CD4-positive, alpha-beta memory T cell (primary cell): ENCODE measurements at regions of chrX and their contacts with region 1.

Region 1: GRCh38 chrX:16695079-16695676 is 17.3 kb downstream of the CTPS2 start:
- DNase-seq: peak in 4 of 5 donors; percentile 44 to 58 (median 56)
- H3K4me3 ChIP-seq: no peak overlapping the region
- H3K4me3 Mint-ChIP-seq: no peak overlapping the region
- H3K27ac ChIP-seq: no peak overlapping the region
- H3K27ac Mint-ChIP-seq: peak overlapping the region in 1 of 7 donors; percentile 19
- H3K4me1 ChIP-seq: no peaks in the 10 kb centered on the region
- H3K4me1 Mint-ChIP-seq: peaks cover 0 to 2% (median 0%) of the 10 kb centered on the region in 4 donors
- H3K27me3 ChIP-seq: no peaks in the 10 kb centered on the region
- H3K27me3 Mint-ChIP-seq: no peaks in the 10 kb centered on the region

Region 2: GRCh38 chrX:16123222-16123786 is 571.9 kb before region 1 on chrX and contains the start of gene GRPR:
- CTCF ChIA-PET with region 1: interaction called, 8 read pairs
- POLR2A ChIA-PET with region 1: no interaction called
- intact Hi-C with region 1: loop called (anchors 1 kb)
- DNase-seq: peak; percentile 43 to 57 (median 43)
- H3K4me3 ChIP-seq: no peak within 1 kb of the TSS
- H3K4me3 Mint-ChIP-seq: peak within 1 kb of the TSS in 3 of 8 donors; percentile 49 to 63 (median 51)
- H3K27ac ChIP-seq: no peak within 1 kb of the TSS
- H3K27ac Mint-ChIP-seq: no peak within 1 kb of the TSS
- H3K4me1 ChIP-seq: no peaks in the 10 kb centered on the region
- H3K4me1 Mint-ChIP-seq: peaks cover 4 to 11% (median 7%) of the 10 kb centered on the region in 4 donors
- H3K27me3 ChIP-seq: no peaks in the 10 kb centered on the region
- H3K27me3 Mint-ChIP-seq: peaks cover 3 to 7% of the 10 kb centered on the region in 2 donors
- total RNA-seq, gene GRPR: 0.23 to 0.33 TPM

Region 3: DNA sequence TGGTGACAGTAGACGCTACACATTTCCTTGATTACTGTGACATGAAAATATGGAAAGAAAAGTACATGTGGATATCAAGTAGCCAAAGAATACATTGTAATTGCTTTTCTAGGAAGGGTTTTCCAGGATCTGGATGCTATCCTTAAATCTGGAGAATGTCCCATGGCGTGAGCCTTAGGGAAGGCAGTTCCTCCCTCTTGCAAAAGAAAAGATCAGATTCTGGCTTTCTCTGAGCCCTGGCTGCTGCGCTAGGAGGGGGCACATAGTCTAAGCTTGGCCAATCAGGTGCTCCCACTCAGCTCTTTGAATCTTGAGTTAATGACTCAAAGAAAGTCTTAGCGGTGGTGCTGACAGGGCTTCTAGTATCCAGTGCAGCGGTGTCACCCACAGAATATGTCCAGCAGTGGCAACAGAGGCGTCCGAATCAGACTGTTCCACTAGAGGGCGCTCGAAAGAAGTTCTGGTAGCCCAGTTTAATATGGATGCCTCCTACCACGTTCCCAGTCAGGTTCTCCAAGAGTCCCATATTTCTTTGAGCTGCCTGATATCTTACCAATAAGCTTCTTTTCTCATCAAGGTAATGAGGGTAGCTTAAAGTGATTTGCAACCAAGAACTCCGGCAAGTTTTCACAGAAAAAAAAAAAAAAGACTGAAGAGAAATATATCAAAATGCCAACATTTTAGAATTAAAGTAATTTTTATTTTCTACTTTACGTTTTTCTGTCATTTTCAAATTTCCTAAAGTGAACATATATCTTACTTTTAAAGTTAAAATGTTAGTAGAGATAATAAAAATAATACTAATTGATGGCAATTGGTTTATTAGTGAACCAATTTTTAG is 258.6 kb before region 1 on chrX:
- CTCF ChIA-PET with region 1: interaction called, 12 read pairs
- POLR2A ChIA-PET with region 1: no interaction called
- intact Hi-C with region 1: loop called (anchors 1 kb)
- DNase-seq: peak in 4 of 5 donors; percentile 43 to 52 (median 48)
- H3K4me3 ChIP-seq: no peak overlapping the region
- H3K4me3 Mint-ChIP-seq: no peak overlapping the region
- H3K27ac ChIP-seq: no peak overlapping the region
- H3K27ac Mint-ChIP-seq: no peak overlapping the region
- H3K4me1 ChIP-seq: peaks cover 13% of the 10 kb centered on the region
- H3K4me1 Mint-ChIP-seq: peaks cover 5 to 15% (median 11%) of the 10 kb centered on the region in 4 donors
- H3K27me3 ChIP-seq: no peaks in the 10 kb centered on the region
- H3K27me3 Mint-ChIP-seq: no peaks in the 10 kb centered on the region